ENCODE measurements at regions of chr16 and their contacts with region 1.

Region 1: DNA sequence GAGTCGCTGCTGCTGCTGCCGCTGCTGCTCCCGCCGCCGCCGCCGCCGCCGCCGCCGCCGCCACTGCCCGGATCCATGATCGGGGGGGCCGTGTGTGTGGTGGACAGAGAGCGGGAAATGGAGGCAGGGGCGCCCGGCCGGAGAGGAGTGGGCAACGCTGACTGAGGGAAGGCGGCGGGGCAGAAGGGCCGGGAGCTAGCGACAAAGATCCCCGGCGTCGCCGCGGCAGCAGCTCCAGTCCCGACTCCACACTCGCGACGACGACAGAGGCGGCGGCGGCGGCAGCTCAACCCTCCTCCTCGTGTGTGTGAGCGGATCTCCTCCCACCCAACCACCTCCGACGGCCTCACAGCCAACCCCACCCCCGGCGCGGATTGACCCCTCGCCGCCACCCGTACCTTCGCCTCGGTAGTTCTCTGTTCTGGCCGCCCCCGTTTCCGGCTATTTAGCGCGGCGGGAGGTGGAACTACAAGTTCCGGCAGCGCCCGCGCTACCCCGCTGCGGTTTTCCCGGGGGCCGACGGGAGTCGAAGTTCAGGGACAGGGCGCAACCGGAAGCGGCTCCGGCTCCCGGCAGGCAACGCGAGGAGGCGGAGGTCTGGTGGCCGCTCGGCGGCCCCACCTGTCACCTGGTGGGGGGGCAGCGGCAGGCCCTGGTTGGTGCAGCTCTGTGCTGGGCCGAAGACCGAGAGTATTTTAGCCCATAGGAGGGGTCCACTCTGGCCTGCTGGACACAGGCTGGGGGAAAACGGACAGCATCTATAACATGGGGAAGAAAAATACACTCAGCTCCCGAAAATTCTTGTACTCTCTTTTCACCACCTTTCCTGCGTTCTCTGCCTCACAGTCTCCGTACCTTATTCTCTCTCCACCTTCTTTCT is at the start of gene GSPT1:
- DNase-seq: peak; percentile 99 to 100 (median 100)
- ATAC-seq: peak; percentile 96 to 99 (median 98)
- H3K4me3 ChIP-seq: peak within 1 kb of the TSS; percentile 72 to 94 (median 89)
- H3K27ac ChIP-seq: peak within 1 kb of the TSS; percentile 73 to 96 (median 92)
- H3K4me1 ChIP-seq: peaks cover 4 to 39% (median 29%) of the 10 kb centered on the region in 12 donors
- H3K27me3 ChIP-seq: no peaks in the 10 kb centered on the region
- CTCF ChIP-seq: peak in 7 of 12 donors; percentile 9 to 26 (median 16)
- POLR2A ChIP-seq: peak in 1 of 2 donors; percentile 72
- total RNA-seq, gene GSPT1: 58.2 to 131 (median 91.1) TPM

Region 2: DNA sequence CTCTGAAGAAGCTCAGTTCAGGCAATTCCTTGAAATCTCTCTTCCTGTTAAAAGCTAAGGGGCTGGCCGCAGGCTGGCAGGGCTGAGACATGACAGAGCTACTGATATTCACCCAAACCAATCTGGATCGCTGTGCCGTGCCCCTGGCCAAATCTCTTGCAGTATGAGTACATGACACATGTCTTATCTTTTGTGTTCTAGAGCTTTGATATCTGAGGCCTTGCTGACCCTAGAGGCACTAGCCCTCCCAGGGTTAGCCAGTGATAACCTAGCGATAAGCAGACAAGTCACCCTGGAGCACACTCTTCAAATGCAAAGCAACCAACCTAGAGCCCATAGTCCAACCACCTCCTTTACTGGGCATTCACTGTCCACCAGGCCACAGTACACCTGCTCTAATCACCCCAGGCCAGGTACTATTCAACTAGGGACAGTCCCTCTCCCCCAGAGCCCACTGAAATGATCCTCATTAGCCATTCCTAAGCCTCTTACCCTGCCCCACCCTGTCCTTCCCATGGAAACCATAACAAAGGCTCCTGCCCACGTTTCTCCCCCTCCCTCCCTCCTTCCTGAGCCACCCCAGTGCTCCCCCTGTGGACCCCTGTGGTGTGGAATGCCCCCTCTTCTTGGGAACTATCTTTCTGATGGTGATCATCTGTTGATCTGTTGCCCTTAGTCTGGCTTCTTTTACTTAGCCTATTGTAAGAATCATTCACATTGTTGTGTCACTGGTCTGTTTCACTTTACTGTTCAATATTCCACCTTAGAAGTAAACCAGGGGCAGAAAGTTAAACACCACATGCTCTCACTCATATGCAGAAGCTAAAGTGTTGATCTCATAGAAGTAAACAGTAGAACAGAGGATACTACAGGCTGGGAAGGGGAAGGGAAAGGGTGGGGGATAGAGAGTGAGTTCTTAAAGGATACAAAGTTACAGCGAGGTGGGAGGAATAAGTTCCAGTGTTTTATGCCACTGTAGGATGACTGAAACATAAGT is 1273.6 kb before region 1 on chr16:
- intact Hi-C with region 1: no loop called
- DNase-seq: no peak
- ATAC-seq: no peak
- H3K4me3 ChIP-seq: no peak overlapping the region
- H3K27ac ChIP-seq: no peak overlapping the region
- H3K4me1 ChIP-seq: no peaks in the 10 kb centered on the region
- H3K27me3 ChIP-seq: no peaks in the 10 kb centered on the region
- CTCF ChIP-seq: no peak
- POLR2A ChIP-seq: no peak

Region 3: GRCh38 chr16:11651796-11652195 is 264.1 kb before region 1 on chr16:
- intact Hi-C with region 1: no loop called
- DNase-seq: no peak
- ATAC-seq: no peak
- H3K4me3 ChIP-seq: no peak overlapping the region
- H3K27ac ChIP-seq: no peak overlapping the region
- H3K4me1 ChIP-seq: no peaks in the 10 kb centered on the region
- H3K27me3 ChIP-seq: no peaks in the 10 kb centered on the region
- CTCF ChIP-seq: no peak
- POLR2A ChIP-seq: no peak

Region 4: DNA sequence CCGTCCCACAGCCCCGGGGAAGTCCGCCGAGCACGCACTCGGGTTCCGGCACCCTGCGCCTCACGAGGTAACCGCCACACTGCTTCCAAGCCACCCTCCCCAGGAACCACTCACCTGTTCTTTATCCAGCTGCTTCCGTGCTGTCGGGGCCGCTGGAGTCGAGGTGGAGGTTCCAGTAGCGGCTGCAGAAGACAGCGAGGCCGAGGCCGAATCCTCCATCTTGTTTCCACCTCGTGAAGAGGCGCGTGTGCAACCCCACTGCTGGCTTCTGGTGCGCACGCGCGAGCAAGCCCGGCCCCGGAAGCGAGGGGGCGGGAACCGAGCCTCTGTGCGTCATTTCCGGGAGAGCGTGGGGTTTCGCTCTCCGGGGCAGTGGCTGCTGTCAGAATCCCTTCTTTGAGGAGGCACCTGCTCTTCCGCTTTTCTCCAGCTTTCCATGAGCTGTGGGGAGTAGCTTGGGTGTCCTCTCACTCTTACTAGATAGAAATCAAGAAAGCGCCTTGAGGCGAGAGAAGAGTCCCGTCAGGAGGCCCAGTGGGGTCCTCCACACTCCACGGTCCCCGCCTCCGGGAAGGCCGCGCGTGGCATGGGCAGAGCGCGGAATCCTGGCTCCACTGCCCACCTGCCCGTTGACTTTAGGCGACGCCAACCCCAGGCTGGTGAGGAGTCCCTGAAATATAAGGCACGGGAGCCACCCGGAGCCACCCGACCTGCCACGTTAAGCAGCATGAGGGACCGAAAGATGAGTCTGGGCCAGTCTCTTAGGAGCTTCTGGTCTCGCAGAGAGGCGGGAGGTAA is 64.4 kb before region 1 on chr16 and contains the start of gene RSL1D1:
- intact Hi-C with region 1: loop called in 4 of 10 experiments (anchors 5 to 10 kb)
- DNase-seq: peak; percentile 92 to 95 (median 93)
- ATAC-seq: peak; percentile 97 to 99 (median 98)
- H3K4me3 ChIP-seq: peak within 1 kb of the TSS; percentile 59 to 98 (median 77)
- H3K27ac ChIP-seq: peak within 1 kb of the TSS; percentile 49 to 89 (median 86)
- H3K4me1 ChIP-seq: peaks cover 2 to 50% (median 33%) of the 10 kb centered on the region in 12 donors
- H3K27me3 ChIP-seq: no peaks in the 10 kb centered on the region
- CTCF ChIP-seq: no peak
- POLR2A ChIP-seq: peak in 1 of 2 donors; percentile 88
- total RNA-seq, gene RSL1D1: 81.4 to 125 (median 92.3) TPM

Region 5: DNA sequence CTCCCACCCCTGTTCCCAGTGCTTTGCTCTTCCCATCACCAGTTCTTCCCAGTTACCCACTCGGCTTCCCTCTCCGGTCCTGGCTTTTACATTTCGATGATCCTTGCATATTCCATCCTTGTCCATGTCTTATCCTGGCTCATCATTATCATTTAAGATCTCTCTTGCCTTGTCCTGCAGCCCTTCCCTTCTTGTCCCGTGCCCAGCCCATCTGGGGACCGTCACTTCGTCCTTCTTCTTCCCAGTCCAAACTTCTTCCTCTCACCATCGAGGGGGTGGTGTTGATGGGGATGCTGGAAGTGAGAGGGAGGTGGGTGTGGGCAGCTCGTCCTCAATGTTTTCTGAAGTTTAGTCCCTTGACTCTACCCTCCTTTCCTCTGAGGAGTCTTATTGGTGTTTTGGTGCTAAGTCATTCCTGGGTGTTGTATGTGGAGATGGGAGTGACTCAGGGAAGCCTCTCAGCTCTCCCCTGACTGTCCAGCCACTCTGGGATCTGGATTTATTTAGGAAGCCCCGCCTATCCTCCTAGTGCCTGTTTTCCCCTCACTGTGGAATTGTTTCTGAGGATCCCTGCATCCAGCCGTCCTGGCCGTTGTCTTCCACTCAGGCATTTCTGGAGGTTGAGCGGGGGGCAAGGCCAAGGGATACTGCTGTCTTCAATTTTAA is 61.6 kb after region 1 on chr16:
- intact Hi-C with region 1: loop called in 2 of 10 experiments (anchors 1 to 5 kb)
- DNase-seq: peak in 3 of 5 donors; percentile 14 to 34 (median 19)
- ATAC-seq: peak in 3 of 4 donors; percentile 60 to 73 (median 66)
- H3K4me3 ChIP-seq: peak overlapping the region; percentile 83 to 100 (median 92)
- H3K27ac ChIP-seq: peak overlapping the region in 10 of 12 donors; percentile 65 to 92 (median 82)
- H3K4me1 ChIP-seq: peaks cover 0 to 24% (median 17%) of the 10 kb centered on the region in 12 donors
- H3K27me3 ChIP-seq: no peaks in the 10 kb centered on the region
- CTCF ChIP-seq: no peak
- POLR2A ChIP-seq: no peak

Measured in heart left ventricle (tissue), 16 donors.